Activated naive CD4-positive, alpha-beta T cell treated with anti-CD3 and anti-CD28 coated beads for 36 hours (primary cell): ENCODE measurements at regions of chr6 and their contacts with region 1.

Region 1: DNA sequence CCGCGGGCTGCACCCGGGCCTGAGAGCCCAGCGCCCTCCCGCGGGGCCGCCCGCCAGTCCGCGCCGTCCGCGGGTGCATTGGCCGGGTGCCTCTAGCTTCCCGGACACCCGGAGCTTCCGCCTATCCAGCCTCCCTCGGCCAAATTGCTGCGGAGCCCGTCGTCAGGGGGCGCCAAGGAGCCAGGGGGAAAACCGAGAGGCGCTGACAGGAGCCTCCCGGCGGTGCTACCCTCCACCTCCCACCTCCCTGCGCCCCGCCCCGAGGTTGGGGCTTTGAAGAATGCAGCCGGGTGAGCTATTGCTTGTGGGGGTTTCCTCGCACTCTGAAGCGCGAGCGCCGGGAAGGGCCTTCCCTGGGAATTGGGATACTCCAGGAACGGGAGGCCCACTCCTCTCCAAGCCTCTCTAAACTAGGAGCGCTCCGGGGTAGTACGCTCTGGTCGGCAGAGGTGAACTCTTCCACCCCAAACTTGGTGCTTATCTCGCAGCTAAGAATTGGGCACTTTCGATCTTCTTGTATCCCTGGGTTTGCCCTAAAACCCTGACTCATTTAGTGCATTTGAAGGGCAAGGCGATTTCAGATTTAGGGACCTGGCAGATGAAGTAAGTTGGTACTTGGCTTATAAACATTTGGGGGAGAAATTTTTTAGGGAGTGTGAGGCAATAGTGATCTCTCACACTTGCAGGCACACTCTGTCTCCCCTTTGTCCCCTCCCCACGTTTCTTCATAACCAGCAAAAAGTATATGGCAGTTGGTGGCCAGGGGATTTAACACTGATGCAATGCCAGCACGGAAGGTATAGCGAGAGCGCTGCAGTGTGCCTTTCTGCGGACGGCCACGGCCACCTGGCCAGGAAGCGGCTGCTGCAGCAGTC is 501 bp downstream of the BEND6 start:
- DNase-seq: peak; percentile 85
- H3K4me3 Mint-ChIP-seq: peak overlapping the region; percentile 74
- H3K27ac Mint-ChIP-seq: no peak overlapping the region
- H3K4me1 Mint-ChIP-seq: peaks cover 8% of the 10 kb centered on the region
- H3K27me3 Mint-ChIP-seq: peaks cover 60% of the 10 kb centered on the region

Region 2: DNA sequence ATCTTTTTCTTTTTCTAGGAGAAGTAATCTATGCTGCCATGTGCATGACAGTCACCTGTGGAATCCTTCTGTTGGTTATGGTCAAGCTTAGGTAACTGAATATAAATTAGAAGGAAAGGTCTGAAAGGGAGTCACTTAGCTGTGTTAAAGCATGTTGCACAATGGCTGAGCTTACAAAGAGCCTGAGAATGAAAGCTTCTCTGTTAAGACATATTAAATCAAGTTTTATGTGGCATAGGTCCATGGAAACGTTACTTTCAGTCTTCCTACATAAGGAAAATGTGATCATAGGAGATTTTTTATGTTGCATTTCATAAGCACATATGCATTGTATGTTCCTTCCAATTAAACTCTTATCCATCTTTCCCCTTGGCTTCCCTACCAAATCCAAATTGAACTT is 1556.1 kb before region 1 on chr6:
- CTCF ChIA-PET with region 1: no interaction called
- intact Hi-C with region 1: no loop called
- DNase-seq: no peak
- H3K4me3 Mint-ChIP-seq: no peak overlapping the region
- H3K27ac Mint-ChIP-seq: no peak overlapping the region
- H3K4me1 Mint-ChIP-seq: no peaks in the 10 kb centered on the region
- H3K27me3 Mint-ChIP-seq: no peaks in the 10 kb centered on the region

Region 3: DNA sequence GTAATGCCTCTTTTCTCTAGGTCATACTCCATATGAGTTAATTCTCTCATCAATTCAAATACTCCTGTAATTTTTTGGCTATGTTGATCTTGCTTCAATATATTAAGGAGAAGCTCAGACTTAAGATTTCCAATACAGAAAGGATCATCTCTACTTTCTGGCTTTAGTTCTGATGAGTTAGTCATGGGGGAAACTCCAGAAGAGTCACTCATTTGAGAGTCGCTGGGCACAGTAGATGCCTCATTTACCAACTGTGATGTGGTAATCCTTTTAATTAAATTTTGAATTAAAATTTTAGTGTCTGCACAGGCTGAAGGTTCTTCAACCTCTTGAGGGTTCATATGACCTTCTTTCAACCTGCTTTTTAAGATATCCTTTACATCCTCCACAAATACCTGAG is 351.2 kb before region 1 on chr6:
- CTCF ChIA-PET with region 1: no interaction called
- intact Hi-C with region 1: loop called (anchors 10 kb)
- DNase-seq: peak; percentile 25
- H3K4me3 Mint-ChIP-seq: no peak overlapping the region
- H3K27ac Mint-ChIP-seq: no peak overlapping the region
- H3K4me1 Mint-ChIP-seq: peaks cover 36% of the 10 kb centered on the region
- H3K27me3 Mint-ChIP-seq: peaks cover 25% of the 10 kb centered on the region

Region 4: DNA sequence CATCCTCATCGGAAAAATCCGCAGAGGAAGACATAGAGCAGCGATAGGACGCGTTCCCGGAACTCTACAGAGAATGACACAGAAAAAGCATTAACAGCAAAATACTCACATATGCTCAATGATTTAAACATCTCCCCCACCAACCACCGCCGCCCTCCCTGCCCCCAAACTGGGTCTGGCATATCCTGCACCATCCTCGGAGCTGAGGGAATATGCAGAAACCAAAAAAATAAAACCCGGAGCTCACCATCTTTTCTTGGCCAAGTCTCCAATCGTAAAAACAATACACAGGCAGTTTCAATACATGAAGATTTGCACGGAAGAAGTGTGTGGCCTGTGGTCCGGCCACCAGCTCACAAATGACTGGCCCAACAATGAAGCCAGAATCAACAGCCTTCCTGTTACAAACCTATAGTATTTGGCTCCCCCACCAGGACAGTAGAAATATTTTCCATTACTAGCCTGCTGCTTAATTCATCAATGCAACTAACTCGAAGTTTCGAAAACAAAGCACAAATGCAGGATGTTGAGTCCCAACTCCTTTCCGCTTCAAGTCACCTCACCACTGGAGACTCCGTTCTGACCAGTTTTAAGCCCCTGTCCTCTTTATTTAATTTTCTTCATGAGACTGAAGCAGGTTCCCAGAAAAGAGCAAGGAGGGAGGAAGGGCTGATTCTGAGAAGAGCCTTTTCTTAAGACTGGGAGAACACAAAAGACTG is 103.7 kb before region 1 on chr6:
- CTCF ChIA-PET with region 1: no interaction called
- intact Hi-C with region 1: loop called (anchors 2 kb)
- DNase-seq: peak; percentile 43
- H3K4me3 Mint-ChIP-seq: peak overlapping the region; percentile 67
- H3K27ac Mint-ChIP-seq: no peak overlapping the region
- H3K4me1 Mint-ChIP-seq: peaks cover 21% of the 10 kb centered on the region
- H3K27me3 Mint-ChIP-seq: peaks cover 38% of the 10 kb centered on the region

Region 5: DNA sequence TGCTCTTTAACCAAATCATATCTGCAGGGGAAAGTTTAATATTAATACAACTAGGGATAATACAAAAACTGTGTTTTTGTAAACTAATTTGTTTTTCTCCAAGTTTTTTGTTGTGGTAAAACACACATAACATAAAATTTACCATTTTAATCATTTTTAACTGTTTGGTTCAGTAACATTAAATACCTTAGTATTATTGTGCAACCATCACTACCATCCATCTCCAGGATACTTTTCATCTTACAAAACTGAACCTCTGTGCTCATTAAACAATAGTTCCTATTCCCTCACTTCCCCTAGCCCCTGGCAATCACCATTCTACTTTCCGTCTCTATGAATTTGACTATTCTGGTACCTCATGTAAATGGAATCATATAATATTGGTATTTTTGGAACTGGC is 15.4 kb after region 1 on chr6:
- CTCF ChIA-PET with region 1: no interaction called
- intact Hi-C with region 1: no loop called
- DNase-seq: no peak
- H3K4me3 Mint-ChIP-seq: no peak overlapping the region
- H3K27ac Mint-ChIP-seq: no peak overlapping the region
- H3K4me1 Mint-ChIP-seq: no peaks in the 10 kb centered on the region
- H3K27me3 Mint-ChIP-seq: peaks cover 2% of the 10 kb centered on the region

Region 6: GRCh38 chr6:57021086-57021720 is 65.8 kb after region 1 on chr6:
- CTCF ChIA-PET with region 1: interaction called, 3 read pairs
- intact Hi-C with region 1: loop called (anchors 2 kb)
- DNase-seq: peak; percentile 8
- H3K4me3 Mint-ChIP-seq: no peak overlapping the region
- H3K27ac Mint-ChIP-seq: no peak overlapping the region
- H3K4me1 Mint-ChIP-seq: no peaks in the 10 kb centered on the region
- H3K27me3 Mint-ChIP-seq: peaks cover 6% of the 10 kb centered on the region

Region 7: GRCh38 chr6:57089687-57090460 is 134.5 kb after region 1 on chr6 and contains the start of gene ZNF451:
- CTCF ChIA-PET with region 1: interaction called, 3 read pairs
- intact Hi-C with region 1: loop called (anchors 1 kb)
- DNase-seq: peak; percentile 98
- H3K4me3 Mint-ChIP-seq: peak within 1 kb of the TSS; percentile 88
- H3K27ac Mint-ChIP-seq: peak within 1 kb of the TSS; percentile 89
- H3K4me1 Mint-ChIP-seq: peaks cover 32% of the 10 kb centered on the region
- H3K27me3 Mint-ChIP-seq: no peaks in the 10 kb centered on the region
- total RNA-seq, gene ZNF451: 43.8 to 46.2 TPM

Region 8: GRCh38 chr6:57221936-57222742 is 266.7 kb after region 1 on chr6 and contains the start of gene RAB23:
- CTCF ChIA-PET with region 1: no interaction called
- intact Hi-C with region 1: loop called (anchors 1 kb)
- DNase-seq: peak; percentile 74
- H3K4me3 Mint-ChIP-seq: peak within 1 kb of the TSS; percentile 99
- H3K27ac Mint-ChIP-seq: peak within 1 kb of the TSS; percentile 93
- H3K4me1 Mint-ChIP-seq: peaks cover 14% of the 10 kb centered on the region
- H3K27me3 Mint-ChIP-seq: peaks cover 18% of the 10 kb centered on the region
- total RNA-seq, gene RAB23: 1.1 to 1.7 TPM